IMR-90 (cell line): ENCODE measurements at regions of chr12 and their contacts with region 1.

Region 1: GRCh38 chr12:7995266-7995963 is 37.1 kb upstream of the FOXJ2 start:
- DNase-seq: peak; percentile 91
- ATAC-seq: peak; percentile 94
- H3K4me3 ChIP-seq: peak overlapping the region; percentile 15; the same call in 1 of the 2 replicates
- H3K27ac ChIP-seq: peak overlapping the region; percentile 62
- H3K4me1 ChIP-seq: peaks cover 8% of the 10 kb centered on the region
- H3K27me3 ChIP-seq: no peaks in the 10 kb centered on the region
- CTCF ChIP-seq: peak; percentile 82
- POLR2A ChIP-seq: no peak
- RAD21 ChIP-seq: peak; percentile 85

Region 2: GRCh38 chr12:7832059-7832696 is 163.2 kb before region 1 on chr12:
- CTCF ChIA-PET with region 1: interaction called, 4 read pairs
- POLR2A ChIA-PET with region 1: no interaction called
- dilution Hi-C with region 1: no loop called
- in situ Hi-C with region 1: no loop called
- intact Hi-C with region 1: loop called (anchors 1 kb)
- DNase-seq: peak; percentile 71
- ATAC-seq: peak; percentile 97
- H3K4me3 ChIP-seq: no peak overlapping the region
- H3K27ac ChIP-seq: no peak overlapping the region
- H3K4me1 ChIP-seq: no peaks in the 10 kb centered on the region
- H3K27me3 ChIP-seq: peaks cover 1% of the 10 kb centered on the region; the same call in 1 of the 2 replicates
- CTCF ChIP-seq: peak; percentile 71
- POLR2A ChIP-seq: no peak
- RAD21 ChIP-seq: peak; percentile 77

Region 3: DNA sequence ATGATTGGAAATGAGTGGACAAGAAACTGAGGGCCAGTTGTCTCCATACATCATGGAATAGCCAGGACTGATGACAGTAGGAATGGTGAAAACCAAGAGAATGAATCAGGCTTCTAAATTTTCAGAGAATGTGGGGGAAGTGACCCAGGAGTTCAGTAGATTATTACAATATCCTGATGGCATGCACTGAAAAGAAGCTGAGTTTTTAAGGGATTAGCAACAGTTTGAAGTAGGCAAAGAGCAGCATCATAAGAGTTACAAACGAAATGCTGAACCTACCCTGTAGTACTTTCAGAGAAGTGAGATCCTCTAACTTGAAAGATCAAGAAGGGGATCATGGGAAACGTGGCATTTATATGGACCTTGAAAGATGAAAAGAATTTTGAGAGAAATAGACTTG is 135.9 kb before region 1 on chr12:
- CTCF ChIA-PET with region 1: interaction called, 5 read pairs
- POLR2A ChIA-PET with region 1: no interaction called
- dilution Hi-C with region 1: no loop called
- in situ Hi-C with region 1: loop called (anchors 10 kb)
- intact Hi-C with region 1: loop called (anchors 1 kb)
- DNase-seq: peak; percentile 81
- ATAC-seq: peak; percentile 58
- H3K4me3 ChIP-seq: no peak overlapping the region
- H3K27ac ChIP-seq: peak overlapping the region; percentile 43
- H3K4me1 ChIP-seq: peaks cover 3% of the 10 kb centered on the region
- H3K27me3 ChIP-seq: no peaks in the 10 kb centered on the region
- CTCF ChIP-seq: no peak
- POLR2A ChIP-seq: no peak
- RAD21 ChIP-seq: no peak

Region 4: DNA sequence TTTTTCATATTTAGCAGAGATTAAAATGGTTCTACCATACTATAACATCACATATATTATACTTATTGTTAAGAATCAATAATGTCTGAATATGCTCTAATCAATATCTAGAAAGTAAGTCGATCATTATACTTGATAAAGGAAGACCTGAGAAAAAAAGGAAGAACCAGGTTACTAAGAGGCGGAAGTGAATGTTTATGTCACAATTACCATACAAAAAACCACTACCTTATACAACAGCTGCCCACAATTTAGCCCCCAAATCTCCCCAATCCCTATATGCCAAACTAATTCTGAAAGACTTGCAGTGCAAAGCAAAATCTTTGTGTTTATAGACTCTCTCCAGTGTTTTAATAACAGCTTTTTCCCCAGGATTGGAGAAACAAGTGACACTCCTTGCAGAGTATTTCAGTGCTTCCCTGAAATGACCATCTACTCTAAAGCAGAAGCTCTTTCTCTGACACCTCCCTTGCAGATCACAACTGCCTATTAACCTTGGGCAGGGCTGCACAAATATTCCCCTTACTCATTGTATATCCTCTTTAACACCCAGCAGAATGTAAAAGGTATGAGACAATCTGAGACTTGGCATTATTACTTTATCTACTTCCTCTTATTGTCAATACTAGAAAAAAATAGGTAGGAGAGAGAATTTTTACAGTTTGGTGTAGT is 46.7 kb before region 1 on chr12:
- CTCF ChIA-PET with region 1: no interaction called
- POLR2A ChIA-PET with region 1: no interaction called
- dilution Hi-C with region 1: no loop called
- in situ Hi-C with region 1: no loop called
- intact Hi-C with region 1: no loop called
- DNase-seq: no peak
- ATAC-seq: no peak
- H3K4me3 ChIP-seq: no peak overlapping the region
- H3K27ac ChIP-seq: no peak overlapping the region
- H3K4me1 ChIP-seq: no peaks in the 10 kb centered on the region
- H3K27me3 ChIP-seq: no peaks in the 10 kb centered on the region
- CTCF ChIP-seq: no peak
- POLR2A ChIP-seq: no peak
- RAD21 ChIP-seq: no peak

Region 5: DNA sequence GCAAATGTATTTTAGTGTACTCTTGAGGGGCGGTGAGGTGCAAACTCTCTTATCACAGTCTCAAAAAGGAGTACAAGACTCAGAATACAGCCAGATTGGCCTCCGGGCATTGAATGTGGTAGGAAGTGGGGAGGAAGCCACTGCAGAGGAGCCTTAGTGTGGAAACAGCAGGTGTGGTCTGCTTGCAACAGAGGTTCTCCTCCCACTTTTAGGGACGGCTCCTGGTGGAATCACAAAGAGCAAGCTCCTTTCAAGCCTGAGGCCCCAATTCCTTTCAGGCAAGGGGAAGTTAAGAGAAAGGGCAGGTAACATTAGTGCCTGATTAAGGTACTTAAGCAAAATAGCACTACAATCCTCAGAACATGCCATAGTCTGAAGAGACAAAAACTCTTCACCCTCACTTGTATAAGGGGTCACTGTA is 35.7 kb before region 1 on chr12:
- CTCF ChIA-PET with region 1: interaction called, 4 read pairs
- POLR2A ChIA-PET with region 1: no interaction called
- dilution Hi-C with region 1: no loop called
- in situ Hi-C with region 1: no loop called
- intact Hi-C with region 1: loop called (anchors 2 kb)
- DNase-seq: no peak
- ATAC-seq: no peak
- H3K4me3 ChIP-seq: no peak overlapping the region
- H3K27ac ChIP-seq: no peak overlapping the region; the same call in 1 of the 2 replicates
- H3K4me1 ChIP-seq: peaks cover 14% of the 10 kb centered on the region
- H3K27me3 ChIP-seq: no peaks in the 10 kb centered on the region
- CTCF ChIP-seq: no peak
- POLR2A ChIP-seq: no peak
- RAD21 ChIP-seq: no peak

Region 6: GRCh38 chr12:7970475-7971252 is 24.8 kb before region 1 on chr12:
- CTCF ChIA-PET with region 1: interaction called, 5 read pairs
- POLR2A ChIA-PET with region 1: no interaction called
- dilution Hi-C with region 1: no loop called
- in situ Hi-C with region 1: no loop called
- intact Hi-C with region 1: loop called (anchors 2 kb)
- DNase-seq: peak; percentile 94
- ATAC-seq: peak; percentile 97
- H3K4me3 ChIP-seq: peak overlapping the region; percentile 42
- H3K27ac ChIP-seq: peak overlapping the region; percentile 96
- H3K4me1 ChIP-seq: peaks cover 6% of the 10 kb centered on the region
- H3K27me3 ChIP-seq: no peaks in the 10 kb centered on the region
- CTCF ChIP-seq: no peak
- POLR2A ChIP-seq: peak; percentile 72
- RAD21 ChIP-seq: peak; percentile 22

Region 7: GRCh38 chr12:8026291-8026900 is 31.0 kb after region 1 on chr12:
- CTCF ChIA-PET with region 1: no interaction called
- POLR2A ChIA-PET with region 1: no interaction called
- dilution Hi-C with region 1: no loop called
- in situ Hi-C with region 1: no loop called
- intact Hi-C with region 1: loop called (anchors 1 kb)
- DNase-seq: peak; percentile 99
- ATAC-seq: peak; percentile 97
- H3K4me3 ChIP-seq: peak overlapping the region; percentile 76
- H3K27ac ChIP-seq: peak overlapping the region; percentile 94
- H3K4me1 ChIP-seq: no peaks in the 10 kb centered on the region
- H3K27me3 ChIP-seq: no peaks in the 10 kb centered on the region
- CTCF ChIP-seq: no peak
- POLR2A ChIP-seq: peak; percentile 94
- RAD21 ChIP-seq: no peak

Region 8: DNA sequence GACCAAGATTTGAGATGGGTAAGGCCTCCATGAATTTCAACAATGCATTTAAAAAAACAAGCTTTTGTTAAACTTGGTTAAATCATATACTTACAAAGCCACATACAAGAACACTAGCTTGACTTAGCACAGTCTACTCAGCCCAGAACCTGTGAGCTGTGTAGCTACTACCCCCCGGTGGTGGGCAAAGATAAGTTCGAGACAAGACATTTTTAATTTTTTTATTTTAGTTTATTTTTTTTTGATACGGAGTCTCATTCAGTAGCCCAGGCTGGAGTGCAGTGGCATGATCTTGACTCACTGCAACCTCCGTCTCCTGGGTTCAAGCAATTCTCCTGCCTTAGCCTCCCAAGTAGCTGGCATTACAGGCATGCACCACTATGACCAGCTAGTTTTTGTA is 83.0 kb after region 1 on chr12:
- CTCF ChIA-PET with region 1: interaction called, 3 read pairs
- POLR2A ChIA-PET with region 1: no interaction called
- dilution Hi-C with region 1: no loop called
- in situ Hi-C with region 1: no loop called
- intact Hi-C with region 1: loop called (anchors 1 kb)
- DNase-seq: peak; percentile 87
- ATAC-seq: peak; percentile 64
- H3K4me3 ChIP-seq: no peak overlapping the region
- H3K27ac ChIP-seq: no peak overlapping the region
- H3K4me1 ChIP-seq: peaks cover 4% of the 10 kb centered on the region
- H3K27me3 ChIP-seq: no peaks in the 10 kb centered on the region
- CTCF ChIP-seq: peak; percentile 77
- POLR2A ChIP-seq: no peak
- RAD21 ChIP-seq: peak; percentile 84